ENCODE measurements at regions of chr19 and their contacts with region 1.

Region 1: DNA sequence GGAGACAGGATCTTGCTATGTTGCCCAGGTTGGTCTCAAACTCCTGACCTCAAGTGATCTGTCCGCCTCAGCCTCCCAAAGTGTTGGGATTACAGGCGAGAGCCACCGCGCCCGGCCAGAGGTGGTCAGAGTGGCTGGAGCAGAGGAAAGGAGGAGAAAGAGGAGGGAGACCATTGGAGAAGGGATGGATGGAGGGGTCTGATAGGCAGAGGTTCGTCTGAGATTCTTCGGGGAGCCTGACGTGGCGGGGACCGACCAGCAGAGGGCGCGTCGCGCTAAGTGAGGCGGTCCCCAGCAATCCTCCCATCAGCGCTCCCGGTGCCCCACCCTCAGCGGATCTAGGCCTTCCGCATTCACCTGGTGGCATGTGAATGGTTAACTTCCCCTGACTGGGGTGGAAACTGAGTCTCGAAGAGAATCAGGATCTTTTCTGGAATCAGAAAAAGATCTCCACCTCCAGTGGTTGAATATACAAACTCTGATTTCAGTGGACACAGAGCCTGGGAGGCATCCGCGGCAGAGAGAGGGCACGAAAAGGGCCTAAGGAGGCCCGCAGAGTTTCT is 8.8 kb downstream of the GTPBP3 start:
- DNase-seq: peak; percentile 89
- ATAC-seq: peak; percentile 72

Region 2: DNA sequence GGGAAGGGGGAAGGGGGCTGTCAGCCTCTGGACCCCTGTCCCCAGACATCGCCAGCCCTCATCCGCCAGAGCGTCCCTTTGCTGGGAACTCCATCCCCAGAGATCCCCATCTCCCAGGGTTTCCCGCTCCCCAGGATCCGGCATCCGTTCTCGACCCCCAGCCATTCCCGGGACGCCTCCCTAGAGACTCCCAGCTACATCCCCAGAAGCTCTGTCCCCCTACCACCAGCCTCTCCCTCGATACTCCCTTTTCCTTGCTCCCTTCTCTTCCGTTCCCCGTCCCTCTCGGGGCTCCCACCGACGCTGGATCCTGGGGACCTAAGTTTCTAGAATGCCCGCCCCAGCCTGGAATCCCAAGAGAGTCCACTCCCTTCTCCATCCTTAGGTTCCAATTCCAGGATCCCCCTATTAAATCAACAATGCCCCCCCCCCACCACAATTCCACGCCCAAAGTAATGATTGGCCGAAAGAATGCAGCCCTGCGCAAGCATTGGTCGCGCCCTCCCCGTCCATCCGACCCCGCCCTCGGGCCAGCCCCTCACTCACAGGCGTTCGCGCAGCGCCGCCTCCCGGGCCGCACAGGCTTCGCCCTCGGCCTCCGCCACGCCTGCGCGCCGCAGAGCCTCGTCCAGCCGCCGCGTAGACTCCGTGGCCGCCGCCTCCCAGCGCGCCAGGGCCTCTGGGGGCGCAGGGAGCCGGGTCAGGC is 44.6 kb after region 1 on chr19:
- intact Hi-C with region 1: loop called (anchors 1 kb)
- DNase-seq: peak; percentile 94
- ATAC-seq: peak; percentile 93

Region 3: GRCh38 chr19:17419621-17420466 is 73.7 kb after region 1 on chr19 and contains the start of gene MVB12A:
- intact Hi-C with region 1: no loop called
- DNase-seq: peak; percentile 99
- ATAC-seq: peak; percentile 99
- total RNA-seq, gene MVB12A: 19.9 TPM

Region 4: GRCh38 chr19:17784201-17785008 is 438.2 kb after region 1 on chr19:
- intact Hi-C with region 1: loop called (anchors 10 kb)
- DNase-seq: peak; percentile 78
- ATAC-seq: peak; percentile 40

Measured in Right ventricle myocardium inferior (tissue), 1 donor.